ENCODE measurements at regions of chr7 and their contacts with region 1.

Region 1: DNA sequence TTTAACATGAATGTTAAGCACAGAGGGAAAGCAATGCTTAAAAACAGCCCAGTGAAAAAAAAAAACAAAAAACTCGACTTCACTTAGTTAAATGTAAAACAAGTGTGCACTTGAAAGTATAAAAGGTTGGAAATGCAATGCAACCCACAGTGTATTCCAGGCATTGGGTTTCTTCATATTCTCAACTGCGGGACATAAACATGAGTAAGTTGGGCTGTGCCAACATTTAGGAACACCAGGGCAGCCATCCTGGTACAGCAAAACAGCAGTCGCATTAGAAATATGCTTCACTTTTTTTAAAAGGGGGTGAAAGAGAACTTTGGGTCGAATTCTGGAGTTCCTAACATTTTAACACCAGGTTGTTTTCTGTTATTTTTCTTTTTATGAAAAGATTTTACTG is 937 bp downstream of the STEAP1 start:
- DNase-seq: no peak
- H3K4me3 Mint-ChIP-seq: no peak overlapping the region
- H3K27ac Mint-ChIP-seq: no peak overlapping the region
- H3K4me1 Mint-ChIP-seq: peaks cover 4% of the 10 kb centered on the region
- H3K27me3 Mint-ChIP-seq: peaks cover 22% of the 10 kb centered on the region

Region 2: DNA sequence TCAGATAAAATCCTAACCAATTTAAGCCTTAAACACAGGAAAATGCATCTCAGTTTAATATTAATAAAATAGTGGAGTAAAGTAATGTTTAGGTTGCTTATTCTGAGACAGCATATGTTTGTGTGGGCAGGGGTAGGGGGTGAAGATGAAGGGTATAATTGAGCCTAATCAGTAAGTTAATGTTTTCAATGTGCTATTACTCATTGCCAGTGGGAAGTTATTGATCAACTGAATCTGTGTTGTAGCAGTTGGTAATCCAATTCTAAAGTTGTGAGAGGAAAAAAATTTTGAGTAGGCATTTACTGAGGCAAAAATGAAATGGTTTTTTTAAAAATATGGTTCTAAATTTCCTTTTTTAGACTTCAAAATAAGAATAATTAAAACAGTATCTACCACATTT is 106.2 kb after region 1 on chr7:
- CTCF ChIA-PET with region 1: interaction called, 15 read pairs
- DNase-seq: no peak
- H3K4me3 Mint-ChIP-seq: no peak overlapping the region
- H3K27ac Mint-ChIP-seq: no peak overlapping the region
- H3K4me1 Mint-ChIP-seq: no peaks in the 10 kb centered on the region
- H3K27me3 Mint-ChIP-seq: no peaks in the 10 kb centered on the region

Measured in activated naive CD4-positive, alpha-beta T cell treated with anti-CD3 and anti-CD28 coated beads, Interleukin-2, amount 10 ng/mL, durations not matched to agents 7 days and 5 days (primary cell).